B cell (primary cell): ENCODE measurements at regions of chr2 and their contacts with region 1.

Region 1: DNA sequence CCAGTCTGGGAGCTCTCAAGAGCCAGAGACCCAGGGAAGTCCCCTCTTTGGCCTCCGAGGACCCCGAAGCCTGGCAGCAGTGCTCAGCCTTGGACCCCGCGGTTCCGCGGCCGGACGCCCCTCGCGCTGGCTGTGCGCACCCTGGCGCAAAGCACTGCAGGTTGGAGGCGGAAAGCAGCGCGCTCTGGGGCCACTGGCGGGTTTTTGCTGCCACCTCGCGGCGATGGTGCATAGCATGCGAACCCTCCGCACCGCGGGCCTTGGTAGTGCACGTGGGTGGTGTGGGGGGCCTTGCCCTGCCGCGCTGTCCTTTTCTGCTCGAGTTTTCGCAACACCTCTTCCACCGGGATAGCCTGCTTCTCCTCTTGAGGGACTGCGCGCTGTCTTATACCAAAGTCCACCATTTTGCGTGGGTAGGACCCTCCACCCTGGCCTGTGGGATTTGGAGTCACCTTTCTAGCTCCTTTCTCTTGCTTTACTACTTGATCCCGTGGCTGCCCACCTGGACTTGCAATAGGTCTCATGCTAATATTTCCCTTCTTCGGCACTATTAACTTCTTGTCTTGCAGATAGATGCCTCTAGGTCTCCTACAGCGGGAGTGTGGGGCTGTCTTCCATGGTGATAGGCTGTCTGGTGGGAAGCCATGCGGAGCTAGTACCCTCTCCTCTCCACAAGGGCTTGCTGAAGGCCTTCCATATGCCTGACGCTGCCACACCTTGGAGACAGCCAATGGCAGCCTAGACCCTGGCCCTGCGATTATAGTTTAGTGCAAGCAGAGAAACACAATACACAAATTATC is 14.3 kb downstream of the SIX3 start:
- DNase-seq: peak; percentile 85
- ATAC-seq: peak; percentile 80
- H3K4me3 ChIP-seq: peak overlapping the region in 4 of 5 experiments; percentile 9 to 56 (median 35)
- H3K4me3 Mint-ChIP-seq: peak overlapping the region; percentile 82
- H3K27ac ChIP-seq: no peak overlapping the region
- H3K27ac Mint-ChIP-seq: no peak overlapping the region
- H3K4me1 ChIP-seq: peaks cover 35 to 40% of the 10 kb centered on the region in 2 donors
- H3K4me1 Mint-ChIP-seq: peaks cover 36% of the 10 kb centered on the region
- H3K27me3 ChIP-seq: peaks cover 0 to 57% (median 28%) of the 10 kb centered on the region in 4 experiments
- H3K27me3 Mint-ChIP-seq: peaks cover 74% of the 10 kb centered on the region
- CTCF ChIP-seq: peak; percentile 97

Region 2: DNA sequence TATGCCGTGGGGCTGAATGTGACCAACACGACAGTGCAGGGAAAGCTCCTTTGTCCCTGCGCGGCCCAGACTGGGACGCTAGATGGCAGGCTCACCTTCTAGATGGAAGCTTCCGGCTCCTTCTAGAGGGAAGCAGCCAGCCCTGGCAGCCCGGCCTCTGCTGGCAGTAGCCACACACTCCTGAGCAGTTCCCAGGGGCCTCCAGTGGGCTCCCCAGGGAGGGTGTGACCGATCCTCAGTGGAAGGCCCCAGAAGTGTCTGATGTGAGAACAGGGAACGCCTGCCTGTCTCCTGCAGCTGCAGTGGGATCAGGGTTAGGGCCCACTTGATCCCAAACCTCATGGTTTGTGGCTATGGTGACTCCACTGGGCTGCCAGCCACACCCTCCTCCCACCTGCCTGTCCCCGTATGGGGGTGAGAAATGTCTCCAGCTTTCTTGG is 911.5 kb before region 1 on chr2:
- CTCF ChIA-PET with region 1: interaction called, 17 read pairs
- POLR2A ChIA-PET with region 1: no interaction called
- intact Hi-C with region 1: no loop called
- DNase-seq: peak; percentile 80
- ATAC-seq: peak; percentile 98
- H3K4me3 ChIP-seq: no peak overlapping the region
- H3K4me3 Mint-ChIP-seq: no peak overlapping the region
- H3K27ac ChIP-seq: no peak overlapping the region
- H3K27ac Mint-ChIP-seq: no peak overlapping the region
- H3K4me1 ChIP-seq: peaks cover 0 to 6% of the 10 kb centered on the region in 2 donors
- H3K4me1 Mint-ChIP-seq: peaks cover 7% of the 10 kb centered on the region
- H3K27me3 ChIP-seq: no peaks in the 10 kb centered on the region
- H3K27me3 Mint-ChIP-seq: peaks cover 3% of the 10 kb centered on the region
- CTCF ChIP-seq: peak; percentile 84

Region 3: DNA sequence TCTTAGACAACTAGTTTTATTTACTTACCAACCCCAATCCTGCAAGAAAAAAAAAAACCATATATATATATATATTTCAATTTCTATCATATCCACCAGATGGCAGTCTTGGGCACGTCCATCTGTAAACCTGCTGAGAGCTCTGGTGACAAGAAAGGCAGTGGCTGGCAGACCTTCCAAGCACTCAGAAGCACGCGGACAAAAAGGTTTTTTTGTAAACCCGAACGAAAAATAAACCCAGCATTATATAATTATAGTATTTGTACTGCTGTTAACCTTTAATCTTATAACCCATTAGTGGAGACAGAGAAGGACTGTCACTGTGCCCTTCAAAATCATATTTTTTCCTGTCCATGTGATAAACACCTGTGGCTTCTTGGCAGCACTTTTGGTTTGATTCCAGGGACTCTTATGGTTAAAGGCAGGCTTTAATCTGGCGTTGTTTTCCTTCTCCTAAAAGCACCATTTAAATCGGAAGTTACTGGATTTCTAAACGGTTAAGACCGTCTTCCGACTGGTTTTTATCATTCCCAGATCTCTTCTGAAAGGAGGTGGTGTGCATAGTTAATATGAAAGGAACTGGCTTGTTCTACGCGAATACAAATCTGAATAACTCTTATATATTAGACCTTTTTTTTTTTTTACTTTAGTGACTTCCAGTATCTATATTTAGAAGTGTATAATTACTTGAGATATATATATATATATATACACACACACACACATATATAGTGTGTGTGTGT is 711.5 kb before region 1 on chr2:
- CTCF ChIA-PET with region 1: interaction called, 23 read pairs
- POLR2A ChIA-PET with region 1: no interaction called
- intact Hi-C with region 1: loop called (anchors 1 kb)
- DNase-seq: peak; percentile 76
- ATAC-seq: peak; percentile 80
- H3K4me3 ChIP-seq: peak overlapping the region in 3 of 5 experiments; percentile 22 to 52 (median 24)
- H3K4me3 Mint-ChIP-seq: peak overlapping the region; percentile 82
- H3K27ac ChIP-seq: no peak overlapping the region
- H3K27ac Mint-ChIP-seq: peak overlapping the region; percentile 8
- H3K4me1 ChIP-seq: peaks cover 5 to 7% of the 10 kb centered on the region in 2 donors
- H3K4me1 Mint-ChIP-seq: peaks cover 15% of the 10 kb centered on the region
- H3K27me3 ChIP-seq: no peaks in the 10 kb centered on the region
- H3K27me3 Mint-ChIP-seq: no peaks in the 10 kb centered on the region
- CTCF ChIP-seq: peak; percentile 88

Region 4: DNA sequence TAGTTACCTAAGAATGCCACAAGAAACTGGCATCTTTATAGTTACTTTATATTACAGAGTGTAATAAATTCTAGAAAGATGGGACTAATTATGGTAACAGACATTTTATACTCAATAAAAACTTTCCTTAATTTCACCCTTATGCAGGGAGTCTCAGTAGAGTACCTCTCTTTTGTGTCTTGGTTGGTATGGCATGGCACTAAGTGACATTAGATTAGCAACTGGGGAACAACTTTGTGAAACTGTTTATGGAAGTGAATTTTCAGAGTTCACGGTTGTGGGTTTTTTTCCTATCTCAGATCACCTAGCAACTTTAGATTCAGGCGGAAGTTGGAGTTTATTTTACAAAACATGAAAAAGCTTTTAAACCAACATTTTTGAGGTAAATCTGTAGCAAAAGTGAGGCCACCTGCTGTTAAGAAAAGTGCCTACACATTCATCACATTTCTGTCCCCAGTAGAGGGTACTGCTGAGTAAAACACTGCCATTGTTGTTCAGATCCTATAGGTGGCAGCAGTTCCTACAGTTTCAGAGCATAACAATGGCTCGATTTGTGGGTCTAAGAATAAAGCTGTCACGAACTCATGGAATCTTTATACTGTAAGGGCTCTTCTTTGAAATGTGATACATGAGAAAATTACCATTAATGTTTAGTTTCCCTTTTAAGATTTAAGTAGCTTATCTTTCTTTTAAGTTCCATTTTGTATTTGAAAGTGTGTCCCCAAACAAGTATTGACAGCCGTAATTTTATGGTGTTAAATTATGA is 476.5 kb before region 1 on chr2:
- CTCF ChIA-PET with region 1: interaction called, 203 read pairs
- POLR2A ChIA-PET with region 1: no interaction called
- intact Hi-C with region 1: loop called (anchors 1 kb)
- DNase-seq: peak; percentile 81
- ATAC-seq: peak; percentile 100
- H3K4me3 ChIP-seq: no peak overlapping the region
- H3K4me3 Mint-ChIP-seq: no peak overlapping the region
- H3K27ac ChIP-seq: no peak overlapping the region
- H3K27ac Mint-ChIP-seq: no peak overlapping the region
- H3K4me1 ChIP-seq: no peaks in the 10 kb centered on the region
- H3K4me1 Mint-ChIP-seq: peaks cover 4% of the 10 kb centered on the region
- H3K27me3 ChIP-seq: no peaks in the 10 kb centered on the region
- H3K27me3 Mint-ChIP-seq: no peaks in the 10 kb centered on the region
- CTCF ChIP-seq: peak; percentile 100

Region 5: DNA sequence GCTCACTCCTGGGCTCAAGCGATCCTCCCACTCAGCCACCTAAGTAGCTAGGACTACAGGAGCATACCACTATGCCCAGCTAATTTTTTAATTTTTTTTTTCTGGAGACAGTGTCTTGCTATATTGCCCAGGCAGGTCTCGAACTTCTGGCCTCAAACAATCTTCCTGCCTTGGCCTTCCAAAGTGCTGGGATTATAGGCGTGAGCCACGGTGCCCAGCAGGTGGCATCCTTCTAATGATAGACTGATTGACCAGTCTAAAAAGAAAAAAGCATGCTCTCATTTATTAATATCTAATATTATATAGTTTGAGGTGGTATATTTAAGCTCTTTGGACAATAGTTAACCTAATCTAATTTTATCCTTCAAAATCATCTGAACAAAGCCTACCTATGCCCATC is 395.4 kb before region 1 on chr2:
- CTCF ChIA-PET with region 1: interaction called, 88 read pairs
- POLR2A ChIA-PET with region 1: no interaction called
- intact Hi-C with region 1: no loop called
- DNase-seq: peak; percentile 22
- ATAC-seq: no peak
- H3K4me3 ChIP-seq: no peak overlapping the region
- H3K4me3 Mint-ChIP-seq: no peak overlapping the region
- H3K27ac ChIP-seq: no peak overlapping the region
- H3K27ac Mint-ChIP-seq: no peak overlapping the region
- H3K4me1 ChIP-seq: peaks cover 0 to 5% of the 10 kb centered on the region in 2 donors
- H3K4me1 Mint-ChIP-seq: no peaks in the 10 kb centered on the region
- H3K27me3 ChIP-seq: no peaks in the 10 kb centered on the region
- H3K27me3 Mint-ChIP-seq: no peaks in the 10 kb centered on the region
- CTCF ChIP-seq: peak; percentile 31